ENCODE measurements at regions of chr5 and their contacts with region 1.

Region 1: GRCh38 chr5:113204525-113205161 is 228.0 kb downstream of the DCP2 start:
- DNase-seq: peak; percentile 81
- H3K4me3 ChIP-seq: no peak overlapping the region
- H3K27ac ChIP-seq: peak overlapping the region; percentile 5
- H3K4me1 ChIP-seq: peaks cover 38% of the 10 kb centered on the region
- H3K27me3 ChIP-seq: no peaks in the 10 kb centered on the region
- CTCF ChIP-seq: no peak

Region 2: DNA sequence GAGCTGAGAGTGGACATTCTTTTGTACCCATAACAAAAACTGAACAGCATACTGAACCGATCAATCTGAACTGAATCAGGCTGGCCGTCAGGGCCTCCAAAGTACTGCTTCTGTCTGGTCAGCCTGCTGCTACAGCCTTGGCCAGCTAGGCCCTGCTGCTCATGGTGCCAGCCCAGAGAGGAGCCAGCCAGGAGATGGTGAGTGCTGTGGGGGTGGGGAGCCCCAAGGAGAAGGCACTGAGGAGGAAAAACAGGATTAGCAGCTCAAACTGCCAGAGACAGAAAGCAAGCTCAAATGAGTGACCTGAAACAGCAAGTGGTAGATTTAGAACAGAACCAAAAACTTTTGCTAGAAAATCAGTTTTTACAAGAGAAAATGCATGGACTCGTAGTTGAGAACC is 319.6 kb before region 1 on chr5:
- CTCF ChIA-PET with region 1: no interaction called
- dilution Hi-C with region 1: no loop called
- in situ Hi-C with region 1: no loop called
- intact Hi-C with region 1: no loop called
- DNase-seq: no peak
- H3K4me3 ChIP-seq: no peak overlapping the region
- H3K27ac ChIP-seq: no peak overlapping the region
- H3K4me1 ChIP-seq: no peaks in the 10 kb centered on the region
- H3K27me3 ChIP-seq: no peaks in the 10 kb centered on the region
- CTCF ChIP-seq: no peak

Region 3: DNA sequence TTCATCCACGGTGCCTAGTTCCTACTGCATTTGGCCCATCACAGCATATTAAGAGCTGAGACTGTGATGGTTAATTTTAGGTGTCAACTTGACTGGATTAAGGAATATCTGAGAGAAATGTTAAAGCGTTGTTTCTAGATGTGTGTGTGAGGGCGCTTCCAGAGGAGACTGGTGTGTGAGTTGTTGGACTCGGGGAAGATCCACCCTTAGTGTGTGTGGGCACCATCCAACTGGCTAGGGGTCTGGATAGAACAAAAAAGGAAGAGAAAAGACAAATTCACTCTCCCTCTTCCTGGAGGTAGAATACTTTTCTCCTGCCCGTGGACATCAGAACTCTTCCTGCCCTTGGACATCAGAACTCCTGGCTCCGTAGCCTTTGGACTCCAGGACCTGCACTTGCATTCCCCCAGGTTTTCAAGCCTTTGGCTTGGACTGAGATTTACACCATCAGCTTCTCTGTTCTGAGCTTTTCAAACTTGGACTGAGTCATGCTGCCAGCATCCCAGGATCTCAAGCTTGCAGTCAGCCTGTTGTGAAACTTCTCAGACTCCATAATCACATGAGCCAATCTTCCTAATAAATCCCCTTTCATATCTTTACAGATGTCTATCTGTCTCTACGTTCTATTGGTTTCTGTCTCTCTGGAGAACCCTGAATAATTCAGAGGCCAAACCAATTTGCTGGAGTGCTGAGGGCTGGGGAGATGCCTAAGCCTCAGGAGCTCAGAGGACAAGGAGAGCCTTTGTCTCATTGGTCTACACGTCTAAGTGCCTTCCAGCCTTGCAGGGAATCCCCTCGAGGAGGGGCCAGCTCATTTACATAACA is 63.6 kb before region 1 on chr5:
- CTCF ChIA-PET with region 1: no interaction called
- dilution Hi-C with region 1: loop called (anchors 5 kb)
- in situ Hi-C with region 1: no loop called
- intact Hi-C with region 1: no loop called
- DNase-seq: peak; percentile 90
- H3K4me3 ChIP-seq: no peak overlapping the region
- H3K27ac ChIP-seq: peak overlapping the region; percentile 55
- H3K4me1 ChIP-seq: peaks cover 36% of the 10 kb centered on the region
- H3K27me3 ChIP-seq: no peaks in the 10 kb centered on the region
- CTCF ChIP-seq: no peak

Region 4: GRCh38 chr5:113166852-113167366 is 37.7 kb before region 1 on chr5:
- CTCF ChIA-PET with region 1: no interaction called
- dilution Hi-C with region 1: no loop called
- in situ Hi-C with region 1: no loop called
- intact Hi-C with region 1: loop called (anchors 2 kb)
- DNase-seq: peak; percentile 97
- H3K4me3 ChIP-seq: no peak overlapping the region
- H3K27ac ChIP-seq: peak overlapping the region; percentile 74
- H3K4me1 ChIP-seq: peaks cover 75% of the 10 kb centered on the region
- H3K27me3 ChIP-seq: no peaks in the 10 kb centered on the region
- CTCF ChIP-seq: no peak

Region 5: DNA sequence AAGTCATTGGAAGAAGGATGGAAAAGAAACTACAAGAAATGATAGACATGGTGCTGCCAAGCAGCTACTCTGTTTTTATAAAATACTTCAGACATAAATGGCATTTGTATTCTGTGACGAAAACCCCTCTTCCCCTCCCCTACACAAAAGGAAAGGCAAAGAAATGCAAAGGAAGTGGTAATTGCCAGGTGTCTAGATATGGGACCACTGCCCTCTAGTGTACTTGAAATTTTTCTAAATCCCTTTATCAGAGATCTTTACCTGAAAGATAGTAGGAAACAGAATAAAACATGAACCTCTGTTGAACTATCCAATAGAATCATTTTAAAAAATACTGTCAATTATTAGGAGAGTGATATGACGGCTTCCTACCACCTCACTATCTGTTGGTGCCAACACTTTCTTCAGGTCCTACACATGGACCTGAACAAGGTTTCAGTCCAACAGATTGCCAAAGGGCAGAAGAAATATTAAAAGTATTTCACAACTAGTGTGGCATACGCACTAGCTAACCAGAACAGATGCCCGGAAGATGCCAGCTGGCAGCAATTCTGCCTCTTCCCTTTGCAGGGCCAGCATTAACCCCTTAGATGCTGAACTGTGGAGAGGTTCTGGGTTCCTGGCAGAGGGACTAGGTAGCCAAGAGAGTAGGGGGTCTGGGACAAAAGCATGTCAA is 126.0 kb after region 1 on chr5:
- CTCF ChIA-PET with region 1: no interaction called
- dilution Hi-C with region 1: no loop called
- in situ Hi-C with region 1: no loop called
- intact Hi-C with region 1: loop called (anchors 5 kb)
- DNase-seq: peak; percentile 50
- H3K4me3 ChIP-seq: no peak overlapping the region
- H3K27ac ChIP-seq: peak overlapping the region; percentile 25
- H3K4me1 ChIP-seq: peaks cover 12% of the 10 kb centered on the region
- H3K27me3 ChIP-seq: no peaks in the 10 kb centered on the region
- CTCF ChIP-seq: peak; percentile 38 to 56